Posterior vena cava (tissue), 2 donors: ENCODE measurements at regions of chr2 and their contacts with region 1.

Region 1: DNA sequence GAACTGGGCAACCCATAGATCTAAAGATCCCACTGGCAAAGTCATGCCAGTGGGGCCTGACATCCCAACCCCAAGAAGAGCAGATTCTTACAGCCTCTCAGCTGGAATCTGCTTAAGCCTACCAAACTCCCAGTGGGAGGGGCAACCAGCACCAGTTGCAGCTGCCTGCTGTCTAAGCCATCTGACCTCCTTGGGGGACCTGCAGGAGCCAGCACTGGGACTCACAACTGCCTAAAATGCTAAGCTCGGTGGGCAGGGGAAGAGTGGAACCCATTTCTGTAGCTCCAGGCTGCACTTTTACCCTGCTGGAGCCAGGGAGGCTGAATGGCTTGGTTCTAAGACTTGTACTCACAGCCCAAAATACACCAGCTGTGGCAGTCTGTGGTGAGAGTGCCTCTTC is 770.7 kb upstream of the SLC8A1 start:
- DNase-seq: no peak

Region 2: DNA sequence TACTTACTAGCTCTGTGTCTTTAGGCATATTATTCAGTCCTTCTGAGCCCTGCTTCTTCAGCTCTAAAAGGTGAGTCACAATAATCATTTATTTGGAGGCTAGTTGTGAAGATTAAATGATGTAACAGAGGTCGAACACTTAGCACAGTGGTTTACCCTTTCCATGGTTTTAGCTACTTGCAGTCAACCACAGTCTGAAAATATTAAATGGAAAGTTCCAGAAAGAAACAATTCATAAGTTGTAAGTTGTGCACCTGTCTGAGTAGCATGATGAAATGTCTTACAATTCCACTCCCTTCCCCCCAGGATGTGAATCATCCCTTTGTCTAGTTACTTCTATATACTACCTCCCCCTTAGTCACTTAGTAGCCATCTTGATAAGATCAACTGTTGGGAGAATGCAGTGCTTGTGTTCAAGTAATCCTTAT is 1226.0 kb before region 1 on chr2:
- intact Hi-C with region 1: no loop called
- DNase-seq: no peak

Region 3: DNA sequence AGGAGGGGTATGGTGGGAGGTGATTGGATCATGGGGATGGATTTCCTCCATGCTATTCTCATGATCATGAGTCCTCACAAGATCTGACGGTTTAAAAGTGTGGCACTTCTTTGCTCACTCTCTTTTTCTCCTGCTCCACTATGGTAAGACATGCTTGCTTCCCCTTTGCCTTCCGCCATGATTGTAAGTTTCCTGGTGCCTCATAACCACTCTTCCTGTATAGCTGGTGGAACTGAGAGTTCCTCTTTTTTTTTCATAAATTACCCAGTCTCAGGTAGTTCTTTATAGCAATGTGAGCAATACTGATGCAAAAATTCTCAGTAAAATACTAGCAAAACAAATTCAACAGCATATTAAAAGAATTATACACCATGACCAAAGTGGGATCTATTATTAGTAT is 42.2 kb before region 1 on chr2:
- intact Hi-C with region 1: no loop called
- DNase-seq: no peak

Region 4: GRCh38 chr2:41241325-41242000 is 18.8 kb after region 1 on chr2:
- intact Hi-C with region 1: loop called in 1 of 2 experiments (anchors 1 kb)
- DNase-seq: no peak

Region 5: DNA sequence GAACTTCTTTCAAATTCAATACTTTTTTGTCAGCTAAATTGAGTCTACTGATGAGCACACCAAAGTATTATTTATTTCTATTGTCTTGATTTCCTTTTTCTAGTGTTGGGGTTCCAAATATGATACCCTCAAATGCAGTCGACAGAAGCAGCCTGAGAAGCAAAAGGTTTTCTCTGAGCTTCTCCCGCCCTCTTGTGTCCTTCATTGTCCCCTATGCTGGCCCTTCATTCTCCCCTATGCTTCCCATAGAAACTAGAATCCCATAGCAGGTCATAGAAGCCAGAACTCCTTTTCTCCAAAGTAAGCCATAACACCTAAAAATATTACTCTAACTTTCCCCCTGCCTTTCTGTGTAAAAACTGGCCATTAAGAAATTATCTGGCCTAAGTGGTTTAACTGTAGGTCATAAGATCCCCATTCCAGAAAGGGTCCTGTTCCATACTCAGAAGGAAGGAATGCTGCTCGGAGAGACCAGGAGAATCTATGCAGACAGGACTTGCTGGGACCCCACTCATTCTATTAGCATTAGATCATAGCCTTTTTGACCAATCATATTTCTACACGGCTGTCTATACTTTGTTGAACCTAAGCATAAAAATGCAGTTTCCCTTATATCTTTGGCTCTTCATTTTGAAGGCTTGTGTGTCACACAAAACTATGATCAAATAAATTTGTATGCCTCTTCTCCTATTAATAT is 60.6 kb after region 1 on chr2:
- intact Hi-C with region 1: no loop called
- DNase-seq: no peak